Activated naive CD4-positive, alpha-beta T cell treated with anti-CD3 and anti-CD28 coated beads for 36 hours (primary cell): ENCODE measurements at regions of chr2 and their contacts with region 1.

Region 1: GRCh38 chr2:23926750-23927571 is at the start of gene ATAD2B:
- DNase-seq: peak; percentile 93
- H3K4me3 Mint-ChIP-seq: peak within 1 kb of the TSS; percentile 96
- H3K27ac Mint-ChIP-seq: peak within 1 kb of the TSS; percentile 99
- H3K4me1 Mint-ChIP-seq: peaks cover 36% of the 10 kb centered on the region
- H3K27me3 Mint-ChIP-seq: no peaks in the 10 kb centered on the region
- total RNA-seq, gene ATAD2B: 12.9 to 15.4 TPM

Region 2: DNA sequence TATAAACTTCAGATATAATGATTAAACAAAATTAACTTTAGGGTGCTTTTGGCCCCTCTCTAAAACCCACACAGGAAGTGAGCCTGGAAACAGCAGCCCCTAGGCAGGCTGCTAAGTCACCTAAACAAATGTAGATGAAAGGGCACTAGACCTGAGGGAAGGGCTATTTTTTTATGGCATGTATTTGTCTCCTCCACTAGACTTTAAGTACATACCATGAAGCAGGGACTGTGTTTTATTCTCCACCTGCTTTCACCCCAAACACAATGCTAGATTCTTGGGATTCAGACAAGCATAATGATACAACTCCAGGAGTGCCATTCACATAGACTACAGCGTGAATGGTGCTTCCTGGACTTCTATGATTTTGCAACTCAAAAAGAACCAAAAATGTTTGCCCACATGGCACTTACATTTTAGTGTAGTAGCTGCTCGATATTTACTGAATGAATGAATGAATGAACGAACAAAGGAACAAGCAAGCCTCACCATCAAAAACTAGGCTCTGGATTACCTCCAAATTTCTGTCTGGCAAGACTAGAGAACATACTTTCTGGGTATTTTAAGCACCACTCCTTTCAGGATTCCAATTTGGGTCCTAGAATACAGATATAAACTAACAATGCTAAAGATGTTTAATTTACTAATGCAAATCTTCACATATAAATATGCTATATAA is 10.1 kb before region 1 on chr2:
- CTCF ChIA-PET with region 1: interaction called, 3 read pairs
- intact Hi-C with region 1: loop called (anchors 1 kb)
- DNase-seq: no peak
- H3K4me3 Mint-ChIP-seq: no peak overlapping the region
- H3K27ac Mint-ChIP-seq: no peak overlapping the region
- H3K4me1 Mint-ChIP-seq: peaks cover 45% of the 10 kb centered on the region
- H3K27me3 Mint-ChIP-seq: no peaks in the 10 kb centered on the region

Region 3: DNA sequence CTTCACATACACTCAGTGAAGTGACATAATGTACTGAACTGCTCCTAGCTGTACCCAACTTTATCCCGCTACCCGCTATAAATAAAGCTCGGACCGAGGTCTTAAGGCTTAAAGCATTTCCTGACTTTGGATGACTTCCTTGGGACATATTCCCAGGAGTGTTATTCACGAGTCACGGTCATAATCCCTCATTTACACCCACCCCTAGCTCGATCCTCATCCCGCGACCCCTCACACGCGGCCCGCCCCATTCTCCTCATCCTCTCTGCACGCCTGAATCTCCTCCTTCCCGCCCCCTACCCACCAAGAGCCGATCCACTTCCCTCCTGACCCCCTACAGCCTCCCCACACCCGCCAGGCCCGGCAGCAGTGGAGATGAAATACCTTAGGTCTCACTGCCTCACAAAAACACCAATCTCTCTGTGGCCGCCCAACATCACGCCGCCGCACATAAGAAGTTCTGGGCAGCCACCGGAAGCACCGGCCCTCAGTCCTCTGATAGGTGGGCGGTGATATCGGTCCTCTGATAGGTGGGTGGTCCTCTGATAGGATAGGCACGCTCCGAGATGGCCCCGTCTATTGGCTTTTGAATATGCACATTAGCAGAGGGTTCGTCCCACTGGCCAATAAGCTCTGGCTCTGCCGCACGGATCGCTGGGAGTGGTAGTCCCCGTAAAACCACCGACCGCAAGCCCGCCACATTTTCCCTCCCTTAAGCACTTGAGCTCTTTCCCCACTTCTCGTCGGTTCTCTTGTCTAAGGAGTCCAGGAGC is 120.2 kb after region 1 on chr2 and contains the start of gene WDCP:
- CTCF ChIA-PET with region 1: interaction called, 8 read pairs
- intact Hi-C with region 1: loop called (anchors 1 kb)
- DNase-seq: peak; percentile 98
- H3K4me3 Mint-ChIP-seq: peak within 1 kb of the TSS; percentile 95
- H3K27ac Mint-ChIP-seq: peak within 1 kb of the TSS; percentile 80
- H3K4me1 Mint-ChIP-seq: peaks cover 22% of the 10 kb centered on the region
- H3K27me3 Mint-ChIP-seq: peaks cover 7% of the 10 kb centered on the region
- total RNA-seq, gene WDCP: 17.6 to 21.1 TPM

Region 4: DNA sequence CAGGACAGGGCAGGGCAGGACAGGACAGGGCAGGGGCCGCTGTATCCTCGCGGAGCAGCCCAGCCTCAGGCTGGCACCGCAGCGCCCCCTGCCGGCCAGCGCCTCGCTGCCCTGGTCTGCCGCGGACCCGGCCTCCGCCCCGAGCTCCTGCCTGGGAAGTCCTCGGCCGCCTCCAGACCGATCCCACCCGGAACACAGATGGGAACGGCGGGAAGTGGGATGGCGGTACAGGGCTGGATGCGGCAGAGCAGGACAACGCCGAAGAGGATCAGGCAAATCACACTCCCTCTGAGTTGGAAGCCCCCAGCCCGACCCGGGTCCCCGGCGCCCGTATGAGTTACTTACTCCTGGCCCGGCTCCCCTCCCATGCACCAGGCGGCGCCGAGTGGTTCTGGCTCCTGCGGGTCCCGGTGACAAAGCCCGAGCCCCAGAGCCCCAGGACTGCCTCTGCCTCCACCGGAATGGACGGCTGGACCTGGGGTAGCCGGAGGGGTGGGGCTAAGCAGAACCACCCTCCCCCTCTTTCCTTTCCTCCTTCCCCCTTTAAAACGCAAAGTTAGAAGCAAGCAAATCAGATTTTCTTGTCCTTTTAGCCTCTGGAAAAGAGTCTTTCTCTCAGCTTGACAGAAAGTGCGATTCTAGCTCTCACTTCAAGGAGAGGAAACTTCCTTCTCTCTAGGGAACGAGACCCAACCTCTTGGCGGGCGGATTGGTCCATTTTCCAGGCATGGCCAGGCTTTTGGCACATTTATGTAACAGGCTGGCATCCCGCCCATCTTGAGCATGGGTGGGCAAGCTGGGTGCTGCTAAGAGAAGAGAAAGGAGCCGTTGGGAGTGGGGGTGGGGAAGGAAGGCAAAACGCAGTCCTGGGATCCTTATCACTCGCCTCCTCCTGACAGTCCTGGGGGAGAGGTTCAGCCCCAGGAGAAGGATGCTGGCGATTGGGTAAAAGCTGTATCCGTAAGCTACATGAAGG is 157.7 kb after region 1 on chr2 and contains the start of gene TP53I3:
- CTCF ChIA-PET with region 1: interaction called, 59 read pairs
- intact Hi-C with region 1: loop called (anchors 1 kb)
- DNase-seq: peak; percentile 80
- H3K4me3 Mint-ChIP-seq: peak within 1 kb of the TSS; percentile 85
- H3K27ac Mint-ChIP-seq: peak within 1 kb of the TSS; percentile 27
- H3K4me1 Mint-ChIP-seq: peaks cover 8% of the 10 kb centered on the region
- H3K27me3 Mint-ChIP-seq: no peaks in the 10 kb centered on the region
- total RNA-seq, gene TP53I3: 0.60 to 0.81 TPM

Region 5: GRCh38 chr2:24360050-24360962 is 433.3 kb after region 1 on chr2 and contains the start of gene ITSN2:
- CTCF ChIA-PET with region 1: interaction called, 3 read pairs
- intact Hi-C with region 1: loop called (anchors 1 kb)
- DNase-seq: peak; percentile 84
- H3K4me3 Mint-ChIP-seq: peak within 1 kb of the TSS; percentile 82
- H3K27ac Mint-ChIP-seq: peak within 1 kb of the TSS; percentile 88
- H3K4me1 Mint-ChIP-seq: peaks cover 25% of the 10 kb centered on the region
- H3K27me3 Mint-ChIP-seq: no peaks in the 10 kb centered on the region
- total RNA-seq, gene ITSN2: 46.1 to 46.7 TPM

Region 6: GRCh38 chr2:24792874-24793760 is 866.2 kb after region 1 on chr2 and contains the starts of genes CENPO and PTRHD1:
- CTCF ChIA-PET with region 1: no interaction called
- intact Hi-C with region 1: loop called (anchors 1 kb)
- DNase-seq: peak; percentile 97
- H3K4me3 Mint-ChIP-seq: peak within 1 kb of the TSS; percentile 97
- H3K27ac Mint-ChIP-seq: peak within 1 kb of the TSS; percentile 99
- H3K4me1 Mint-ChIP-seq: peaks cover 40% of the 10 kb centered on the region
- H3K27me3 Mint-ChIP-seq: no peaks in the 10 kb centered on the region
- total RNA-seq, gene CENPO: 36.4 to 38.5 TPM
- total RNA-seq, gene PTRHD1: 21.7 to 23.5 TPM